A549 (cell line): ENCODE measurements at regions of chr7 and their contacts with region 1.

Region 1: DNA sequence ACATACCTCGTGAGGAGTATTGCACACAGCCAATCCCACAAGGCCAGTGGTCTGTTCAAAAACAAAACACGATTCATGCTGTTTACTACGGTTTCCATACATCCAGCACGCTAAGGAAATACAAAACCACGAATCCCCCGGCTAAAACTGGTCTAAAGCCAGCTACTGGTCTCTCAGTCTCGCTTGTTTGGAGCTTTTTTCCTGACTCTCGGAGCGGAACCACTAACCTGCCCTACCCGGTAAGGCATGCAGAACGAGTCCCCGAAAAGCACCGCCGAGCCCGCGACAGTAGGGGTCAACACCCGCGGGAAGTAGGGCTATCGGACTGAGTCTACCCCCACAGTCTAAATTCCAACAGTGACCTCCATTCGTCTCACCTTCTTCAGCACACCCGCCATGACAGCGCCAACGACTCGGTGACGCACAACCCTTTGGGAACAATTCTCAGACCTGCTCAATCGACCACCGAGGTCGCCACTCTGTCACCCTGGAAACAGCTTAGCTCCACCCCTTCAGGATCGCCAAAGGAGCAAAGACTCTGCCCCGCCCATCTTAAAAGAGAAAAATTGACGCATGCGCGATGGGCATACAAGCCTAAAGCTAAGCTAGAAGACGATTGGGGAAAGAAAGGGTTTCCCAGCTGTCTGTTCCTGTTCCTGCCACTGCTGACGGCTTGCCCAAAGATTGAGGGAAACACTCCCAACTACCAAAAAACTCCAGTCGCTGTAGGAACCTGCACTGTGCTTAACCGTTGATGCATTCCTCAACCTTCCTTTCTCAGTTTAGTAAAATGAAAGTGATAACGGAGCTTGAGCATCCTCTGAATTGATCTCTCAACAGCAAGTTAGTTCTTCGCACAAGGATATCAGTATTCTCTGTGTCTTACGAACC is at the start of gene NDUFA5:
- DNase-seq: peak; percentile 88 to 98
- ATAC-seq: peak; percentile 96 to 98
- H3K4me3 ChIP-seq: peak within 1 kb of the TSS; percentile 97
- H3K27ac ChIP-seq: peak within 1 kb of the TSS; percentile 81 to 91
- H3K4me1 ChIP-seq: peaks cover 4% of the 10 kb centered on the region; the same call in 1 of the 3 replicates
- CTCF ChIP-seq: no peak
- EP300 ChIP-seq: no peak
- POLR2A ChIP-seq: peak; percentile 54
- RAD21 ChIP-seq: no peak
- polyA plus RNA-seq, gene NDUFA5: 27.3 and 58.8 TPM in 2 replicates

Region 2: DNA sequence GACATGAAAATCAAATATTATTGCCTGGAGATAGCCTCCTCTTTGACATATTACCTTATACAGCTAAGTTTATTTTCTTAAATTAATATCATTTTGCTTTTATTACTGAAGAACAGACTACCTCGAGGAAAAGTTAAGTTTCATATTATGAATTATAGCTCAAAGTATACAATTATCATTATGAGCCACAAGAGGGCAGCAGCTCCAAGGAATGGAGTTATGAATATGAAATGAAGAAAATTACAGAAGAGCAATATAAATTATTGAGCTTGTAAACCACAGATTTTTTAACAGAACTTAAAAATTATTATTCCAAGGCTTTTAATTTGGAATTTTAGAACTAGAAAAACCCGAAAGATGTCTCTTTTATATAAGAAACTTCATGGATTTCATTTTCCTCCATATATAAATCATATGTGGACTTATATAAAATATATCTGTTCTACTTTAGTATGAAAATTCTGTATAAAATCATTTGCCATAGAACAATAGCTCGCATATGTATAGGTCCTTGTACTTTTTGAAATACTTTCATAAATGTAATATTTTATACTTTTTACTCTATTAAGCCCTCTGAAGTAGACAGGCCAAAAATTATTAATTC is 63.3 kb before region 1 on chr7:
- CTCF ChIA-PET with region 1: interaction called, 11 read pairs
- POLR2A ChIA-PET with region 1: no interaction called
- DNase-seq: peak; percentile 20 to 40
- ATAC-seq: peak in 1 of 2 experiments; percentile 70; a peak in 3 of 6 replicates
- H3K4me3 ChIP-seq: no peak overlapping the region
- H3K27ac ChIP-seq: no peak overlapping the region
- H3K4me1 ChIP-seq: no peaks in the 10 kb centered on the region
- CTCF ChIP-seq: peak; percentile 73
- EP300 ChIP-seq: no peak
- POLR2A ChIP-seq: no peak
- RAD21 ChIP-seq: peak; percentile 74

Region 3: GRCh38 chr7:123534383-123535260 is 23.0 kb before region 1 on chr7 and contains the start of gene IQUB:
- CTCF ChIA-PET with region 1: interaction called, 3 read pairs
- POLR2A ChIA-PET with region 1: interaction called, 10 read pairs
- DNase-seq: peak; percentile 88 to 96
- ATAC-seq: peak; percentile 91 to 92
- H3K4me3 ChIP-seq: peak within 1 kb of the TSS; percentile 63
- H3K27ac ChIP-seq: peak within 1 kb of the TSS; percentile 78 to 89
- H3K4me1 ChIP-seq: peaks cover 21% of the 10 kb centered on the region
- CTCF ChIP-seq: no peak
- EP300 ChIP-seq: no peak
- POLR2A ChIP-seq: no peak
- RAD21 ChIP-seq: no peak
- polyA plus RNA-seq, gene IQUB: 0.05 and 0.08 TPM in 2 replicates

Region 4: DNA sequence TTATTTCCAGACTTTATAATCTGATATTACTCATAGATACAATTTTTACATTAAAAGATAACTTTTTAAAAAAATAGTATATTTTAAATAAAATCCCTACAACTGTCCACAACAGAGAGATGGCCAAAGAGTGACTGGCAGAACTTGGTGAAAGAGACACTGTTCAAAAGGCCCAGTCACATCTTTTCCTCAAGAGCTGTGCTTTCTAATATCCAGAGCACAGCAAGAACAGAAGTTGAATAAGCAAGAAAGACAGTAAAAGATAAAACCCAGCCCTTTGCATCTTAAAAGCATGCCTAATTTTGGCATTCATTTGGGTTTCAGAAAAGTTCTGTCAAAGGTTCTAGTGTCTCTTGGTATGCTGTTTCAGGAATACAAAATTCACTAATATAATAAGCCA is 184.3 kb after region 1 on chr7:
- CTCF ChIA-PET with region 1: no interaction called
- POLR2A ChIA-PET with region 1: no interaction called
- DNase-seq: no peak
- ATAC-seq: no peak
- H3K4me3 ChIP-seq: no peak overlapping the region
- H3K27ac ChIP-seq: no peak overlapping the region
- H3K4me1 ChIP-seq: peaks cover 38% of the 10 kb centered on the region
- CTCF ChIP-seq: no peak
- EP300 ChIP-seq: no peak
- POLR2A ChIP-seq: no peak
- RAD21 ChIP-seq: no peak

Region 5: DNA sequence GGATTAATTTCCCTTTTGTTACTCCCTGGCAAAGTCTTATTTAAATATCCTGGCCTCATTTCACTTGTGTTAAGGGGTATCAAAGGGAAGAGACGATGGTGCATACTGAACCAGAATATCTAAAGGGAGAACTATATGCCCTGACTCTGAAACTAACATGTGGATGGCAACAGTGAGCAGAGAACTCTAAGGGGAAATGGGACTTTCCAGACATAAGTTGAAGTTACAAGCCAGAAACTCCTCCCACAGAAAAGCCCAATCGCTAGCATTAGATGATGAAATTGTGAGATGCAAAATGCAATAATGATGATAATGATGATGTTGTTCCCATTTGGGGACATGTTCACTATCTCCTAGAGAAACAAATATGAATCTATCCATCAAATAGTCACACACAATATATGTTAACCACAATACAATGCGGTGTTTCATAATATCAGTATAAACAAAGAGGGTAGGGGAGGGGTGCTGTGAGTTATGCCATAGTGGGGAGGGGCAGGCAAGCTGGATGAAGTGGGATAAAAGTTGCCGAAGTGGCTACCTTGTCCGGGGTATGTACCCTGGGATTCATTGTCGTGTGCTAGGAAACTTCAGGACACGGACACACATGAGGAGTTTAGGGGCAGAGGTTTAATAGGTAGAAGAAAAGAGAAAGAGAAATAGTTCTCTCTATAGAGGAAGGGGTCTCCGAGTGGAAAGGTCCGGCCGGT is 438.1 kb after region 1 on chr7:
- CTCF ChIA-PET with region 1: no interaction called
- POLR2A ChIA-PET with region 1: no interaction called
- DNase-seq: no peak
- ATAC-seq: no peak
- H3K4me3 ChIP-seq: no peak overlapping the region
- H3K27ac ChIP-seq: no peak overlapping the region
- H3K4me1 ChIP-seq: no peaks in the 10 kb centered on the region
- CTCF ChIP-seq: no peak
- EP300 ChIP-seq: no peak
- POLR2A ChIP-seq: no peak
- RAD21 ChIP-seq: no peak